Activated T-helper 1 cell treated with anti-CD3 and anti-CD28 coated beads, Interleukin-12 subunit alpha, Interleukin-12 subunit beta, Interleukin-2, Interleukin-4 antibody, amounts not matched to agents 30 ng/mL and 10 ng/mL and 1 ng/mL, durations not matched to agents 14 hours and 24 hours and 36 hours (primary cell): ENCODE measurements at regions of chr19 and their contacts with region 1.

Region 1: GRCh38 chr19:45584332-45585157 is at the start of gene OPA3:
- DNase-seq: peak; percentile 98
- H3K4me3 Mint-ChIP-seq: peak within 1 kb of the TSS; percentile 95
- H3K27ac Mint-ChIP-seq: peak within 1 kb of the TSS; percentile 96
- H3K4me1 Mint-ChIP-seq: peaks cover 16% of the 10 kb centered on the region
- H3K27me3 Mint-ChIP-seq: no peaks in the 10 kb centered on the region
- total RNA-seq, gene OPA3: 12.1 and 16.2 TPM in 2 replicates

Region 2: GRCh38 chr19:44890366-44891015 is 694.1 kb before region 1 on chr19:
- intact Hi-C with region 1: loop called (anchors 1 kb)
- DNase-seq: peak; percentile 100
- H3K4me3 Mint-ChIP-seq: peak overlapping the region; percentile 86
- H3K27ac Mint-ChIP-seq: peak overlapping the region; percentile 96
- H3K4me1 Mint-ChIP-seq: peaks cover 30% of the 10 kb centered on the region
- H3K27me3 Mint-ChIP-seq: no peaks in the 10 kb centered on the region

Region 3: GRCh38 chr19:44903602-44904425 is 680.7 kb before region 1 on chr19:
- intact Hi-C with region 1: no loop called
- DNase-seq: peak; percentile 54
- H3K4me3 Mint-ChIP-seq: no peak overlapping the region
- H3K27ac Mint-ChIP-seq: no peak overlapping the region
- H3K4me1 Mint-ChIP-seq: peaks cover 8% of the 10 kb centered on the region
- H3K27me3 Mint-ChIP-seq: peaks cover 16% of the 10 kb centered on the region

Region 4: GRCh38 chr19:45405435-45406225 is 178.9 kb before region 1 on chr19:
- intact Hi-C with region 1: no loop called
- DNase-seq: peak; percentile 77
- H3K4me3 Mint-ChIP-seq: peak overlapping the region; percentile 98
- H3K27ac Mint-ChIP-seq: peak overlapping the region; percentile 90
- H3K4me1 Mint-ChIP-seq: peaks cover 53% of the 10 kb centered on the region
- H3K27me3 Mint-ChIP-seq: peaks cover 12% of the 10 kb centered on the region

Region 5: GRCh38 chr19:45469132-45469944 is 115.2 kb before region 1 on chr19:
- intact Hi-C with region 1: loop called (anchors 1 kb)
- DNase-seq: peak; percentile 92
- H3K4me3 Mint-ChIP-seq: peak overlapping the region; percentile 92
- H3K27ac Mint-ChIP-seq: peak overlapping the region; percentile 94
- H3K4me1 Mint-ChIP-seq: peaks cover 36% of the 10 kb centered on the region
- H3K27me3 Mint-ChIP-seq: peaks cover 33% of the 10 kb centered on the region

Region 6: GRCh38 chr19:45506246-45506990 is 78.1 kb before region 1 on chr19:
- intact Hi-C with region 1: loop called (anchors 1 kb)
- DNase-seq: peak; percentile 94
- H3K4me3 Mint-ChIP-seq: peak overlapping the region; percentile 95
- H3K27ac Mint-ChIP-seq: peak overlapping the region; percentile 95
- H3K4me1 Mint-ChIP-seq: peaks cover 20% of the 10 kb centered on the region
- H3K27me3 Mint-ChIP-seq: peaks cover 3% of the 10 kb centered on the region

Region 7: GRCh38 chr19:45657520-45658167 is 73.1 kb after region 1 on chr19:
- intact Hi-C with region 1: no loop called
- DNase-seq: no peak
- H3K4me3 Mint-ChIP-seq: no peak overlapping the region
- H3K27ac Mint-ChIP-seq: no peak overlapping the region
- H3K4me1 Mint-ChIP-seq: no peaks in the 10 kb centered on the region
- H3K27me3 Mint-ChIP-seq: peaks cover 13% of the 10 kb centered on the region

Region 8: DNA sequence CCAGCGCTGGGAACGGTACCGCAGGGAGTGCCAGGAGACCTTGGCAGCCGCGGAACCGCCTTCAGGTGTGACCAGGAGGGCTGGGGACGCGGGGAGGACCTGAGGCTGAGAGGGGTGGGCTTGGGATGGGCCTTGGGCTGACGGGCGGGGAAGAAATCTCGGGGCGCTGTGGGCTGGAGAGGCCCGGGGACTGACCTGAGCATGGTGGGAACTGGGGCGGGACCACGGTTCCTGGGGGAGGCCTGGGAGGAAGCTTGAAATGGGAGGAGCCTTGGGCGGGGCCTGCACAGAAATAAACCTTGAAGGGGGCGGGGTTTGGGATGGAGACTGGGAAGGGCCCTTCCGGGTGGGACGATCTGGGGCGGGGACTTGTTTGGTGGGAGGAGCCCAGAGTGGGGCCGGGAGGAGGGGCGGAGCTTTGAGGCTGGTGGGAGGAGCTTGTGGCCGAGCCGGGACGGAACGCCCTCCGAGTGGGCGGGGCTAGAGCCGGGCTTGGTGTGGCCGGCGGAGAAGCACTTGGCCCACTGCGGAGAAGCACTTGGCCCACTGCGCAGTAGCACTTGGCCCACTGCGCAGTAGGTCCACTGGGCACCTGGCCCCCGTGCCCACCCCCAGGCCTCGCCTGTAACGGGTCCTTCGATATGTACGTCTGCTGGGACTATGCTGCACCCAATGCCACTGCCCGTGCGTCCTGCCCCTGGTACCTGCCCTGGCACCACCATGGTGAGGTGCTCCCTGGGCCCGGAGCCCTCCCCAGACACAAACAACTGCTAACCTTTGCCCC is 86.3 kb after region 1 on chr19:
- intact Hi-C with region 1: loop called (anchors 1 kb)
- DNase-seq: peak; percentile 68
- H3K4me3 Mint-ChIP-seq: peak overlapping the region; percentile 64
- H3K27ac Mint-ChIP-seq: peak overlapping the region; percentile 63
- H3K4me1 Mint-ChIP-seq: peaks cover 30% of the 10 kb centered on the region
- H3K27me3 Mint-ChIP-seq: peaks cover 10% of the 10 kb centered on the region

Region 9: DNA sequence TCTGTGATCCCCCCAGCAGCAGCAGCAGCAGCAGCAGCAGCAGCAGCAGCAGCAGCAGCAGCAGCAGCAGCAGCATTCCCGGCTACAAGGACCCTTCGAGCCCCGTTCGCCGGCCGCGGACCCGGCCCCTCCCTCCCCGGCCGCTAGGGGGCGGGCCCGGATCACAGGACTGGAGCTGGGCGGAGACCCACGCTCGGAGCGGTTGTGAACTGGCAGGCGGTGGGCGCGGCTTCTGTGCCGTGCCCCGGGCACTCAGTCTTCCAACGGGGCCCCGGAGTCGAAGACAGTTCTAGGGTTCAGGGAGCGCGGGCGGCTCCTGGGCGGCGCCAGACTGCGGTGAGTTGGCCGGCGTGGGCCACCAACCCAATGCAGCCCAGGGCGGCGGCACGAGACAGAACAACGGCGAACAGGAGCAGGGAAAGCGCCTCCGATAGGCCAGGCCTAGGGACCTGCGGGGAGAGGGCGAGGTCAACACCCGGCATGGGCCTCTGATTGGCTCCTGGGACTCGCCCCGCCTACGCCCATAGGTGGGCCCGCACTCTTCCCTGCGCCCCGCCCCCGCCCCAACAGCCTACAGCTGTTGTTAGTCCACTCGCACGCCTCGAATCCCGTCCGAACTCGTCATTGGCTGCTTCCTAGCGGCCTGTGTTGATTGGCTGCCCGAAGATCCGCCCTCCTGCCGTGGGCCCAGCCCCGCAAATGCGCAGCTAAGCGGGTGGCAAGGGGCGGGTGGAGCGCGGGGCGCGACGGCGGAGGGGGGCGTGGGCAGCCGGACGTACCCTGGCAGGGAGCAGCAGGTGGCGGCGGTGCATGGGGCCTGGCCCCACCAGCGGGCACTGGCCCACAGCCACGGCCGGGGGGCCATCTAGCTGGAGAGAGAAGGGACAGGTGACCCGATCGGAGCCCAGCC is 185.9 kb after region 1 on chr19:
- intact Hi-C with region 1: loop called (anchors 1 kb)
- DNase-seq: peak; percentile 85
- H3K4me3 Mint-ChIP-seq: peak overlapping the region; percentile 88
- H3K27ac Mint-ChIP-seq: no peak overlapping the region
- H3K4me1 Mint-ChIP-seq: peaks cover 9% of the 10 kb centered on the region
- H3K27me3 Mint-ChIP-seq: peaks cover 20% of the 10 kb centered on the region

Region 10: DNA sequence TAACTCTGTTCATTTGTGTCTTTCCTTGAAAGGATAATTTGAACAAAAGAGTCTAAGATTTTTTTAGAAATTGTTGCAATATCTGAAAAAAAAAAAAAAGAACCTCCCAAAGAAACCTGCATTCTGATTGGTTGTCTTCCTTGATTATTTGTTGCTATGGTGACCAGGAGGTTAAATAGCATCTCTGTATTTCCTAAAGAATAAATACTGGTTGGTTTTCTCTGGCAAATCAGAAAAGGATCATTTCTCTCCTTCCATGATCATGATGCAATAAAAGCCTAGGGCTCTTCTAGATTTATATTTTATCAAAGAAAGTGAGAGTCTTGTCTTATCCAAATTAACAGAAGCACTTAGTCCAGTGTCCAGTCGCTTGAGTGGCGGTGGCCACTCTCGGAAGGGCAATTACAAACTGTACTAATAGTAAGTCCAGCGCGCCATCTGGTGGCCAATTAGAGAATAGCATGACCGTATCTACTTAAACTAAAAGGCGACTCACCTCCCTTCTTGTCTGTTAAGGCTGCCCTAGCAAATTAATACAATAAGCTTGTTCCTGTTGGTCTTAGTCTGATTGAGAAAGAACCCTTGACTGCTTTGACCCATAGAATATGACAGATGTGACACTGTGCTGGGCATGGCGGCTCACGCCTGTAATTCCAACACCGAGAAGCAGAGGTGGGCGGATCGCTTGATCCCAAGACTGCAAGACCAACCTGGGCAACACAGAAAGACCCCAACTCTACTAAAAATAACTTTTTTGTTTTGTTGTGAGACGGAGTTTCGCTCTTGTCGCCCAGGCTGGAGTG is 958.1 kb after region 1 on chr19:
- intact Hi-C with region 1: no loop called
- DNase-seq: peak; percentile 51
- H3K4me3 Mint-ChIP-seq: no peak overlapping the region
- H3K27ac Mint-ChIP-seq: no peak overlapping the region
- H3K4me1 Mint-ChIP-seq: peaks cover 9% of the 10 kb centered on the region
- H3K27me3 Mint-ChIP-seq: peaks cover 7% of the 10 kb centered on the region